ENCODE measurements at regions of chr11 and their contacts with region 1.

Region 1: GRCh38 chr11:30346068-30346688 is 23.3 kb downstream of the ARL14EP start:
- DNase-seq: no peak
- H3K4me3 Mint-ChIP-seq: no peak overlapping the region
- H3K27ac Mint-ChIP-seq: no peak overlapping the region
- H3K4me1 Mint-ChIP-seq: peaks cover 6% of the 10 kb centered on the region
- H3K27me3 Mint-ChIP-seq: no peaks in the 10 kb centered on the region

Region 2: DNA sequence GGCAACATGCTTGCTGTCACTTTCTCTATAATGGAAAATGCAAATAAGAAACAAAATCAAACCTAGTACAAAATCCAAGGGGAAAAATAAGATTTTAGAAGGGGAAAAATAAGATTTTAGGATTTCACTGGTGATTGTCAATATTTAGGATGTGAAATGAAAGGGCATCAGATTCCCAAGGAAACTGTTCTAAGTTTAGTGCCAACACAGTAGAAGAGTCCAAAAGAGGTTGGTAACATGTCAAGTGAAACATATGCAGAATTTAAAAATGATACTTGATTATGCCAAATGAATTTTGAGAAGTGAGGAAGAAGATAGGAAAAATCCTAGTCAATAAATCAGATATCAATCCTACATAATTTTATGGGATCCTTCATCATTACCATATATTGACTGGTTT is 69.0 kb before region 1 on chr11:
- intact Hi-C with region 1: no loop called
- DNase-seq: no peak
- H3K4me3 Mint-ChIP-seq: no peak overlapping the region
- H3K27ac Mint-ChIP-seq: no peak overlapping the region
- H3K4me1 Mint-ChIP-seq: peaks cover 8% of the 10 kb centered on the region
- H3K27me3 Mint-ChIP-seq: no peaks in the 10 kb centered on the region

Region 3: DNA sequence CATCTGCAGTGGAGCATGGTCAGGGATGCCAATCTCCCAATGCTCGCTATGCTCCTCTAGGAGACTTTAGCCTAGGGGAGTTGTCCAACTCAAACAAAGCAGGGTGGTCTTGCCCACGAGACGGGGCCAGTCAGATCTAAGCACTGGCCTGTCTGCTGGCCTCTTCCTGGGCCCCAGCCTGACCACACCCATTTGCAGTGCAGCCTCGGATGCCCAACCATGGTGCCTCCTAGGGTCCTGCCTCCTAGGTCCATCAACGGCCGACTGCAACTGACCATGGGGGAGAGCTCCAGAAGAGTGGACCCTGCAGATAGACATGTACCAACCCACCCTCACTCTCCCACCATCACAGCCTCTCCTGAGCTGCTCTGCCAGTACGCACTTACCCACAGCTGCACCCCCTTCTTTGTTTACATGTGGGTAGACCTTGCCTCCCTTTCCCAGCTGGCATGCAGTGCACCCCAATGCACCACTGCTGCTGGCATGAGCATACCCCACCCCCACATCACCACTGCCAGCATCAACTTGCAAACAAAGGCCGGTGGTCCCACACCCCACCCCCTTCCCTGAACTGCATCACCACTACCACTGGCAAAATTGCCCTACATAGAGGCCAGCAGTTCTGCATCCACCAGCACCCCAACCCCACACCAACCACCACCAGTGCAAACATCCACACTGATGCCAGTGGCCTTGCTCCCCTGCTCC is 50.8 kb before region 1 on chr11:
- intact Hi-C with region 1: no loop called
- DNase-seq: no peak
- H3K4me3 Mint-ChIP-seq: no peak overlapping the region
- H3K27ac Mint-ChIP-seq: no peak overlapping the region
- H3K4me1 Mint-ChIP-seq: no peaks in the 10 kb centered on the region
- H3K27me3 Mint-ChIP-seq: peaks cover 6% of the 10 kb centered on the region

Region 4: GRCh38 chr11:30322826-30323710 is 23.1 kb before region 1 on chr11 and contains the start of gene ARL14EP:
- intact Hi-C with region 1: loop called (anchors 2 kb)
- DNase-seq: peak; percentile 85
- H3K4me3 Mint-ChIP-seq: peak within 1 kb of the TSS; percentile 99
- H3K27ac Mint-ChIP-seq: peak within 1 kb of the TSS; percentile 99
- H3K4me1 Mint-ChIP-seq: peaks cover 34% of the 10 kb centered on the region
- H3K27me3 Mint-ChIP-seq: peaks cover 9% of the 10 kb centered on the region
- total RNA-seq, gene ARL14EP: 35.8 TPM in 2 replicates

Region 5: DNA sequence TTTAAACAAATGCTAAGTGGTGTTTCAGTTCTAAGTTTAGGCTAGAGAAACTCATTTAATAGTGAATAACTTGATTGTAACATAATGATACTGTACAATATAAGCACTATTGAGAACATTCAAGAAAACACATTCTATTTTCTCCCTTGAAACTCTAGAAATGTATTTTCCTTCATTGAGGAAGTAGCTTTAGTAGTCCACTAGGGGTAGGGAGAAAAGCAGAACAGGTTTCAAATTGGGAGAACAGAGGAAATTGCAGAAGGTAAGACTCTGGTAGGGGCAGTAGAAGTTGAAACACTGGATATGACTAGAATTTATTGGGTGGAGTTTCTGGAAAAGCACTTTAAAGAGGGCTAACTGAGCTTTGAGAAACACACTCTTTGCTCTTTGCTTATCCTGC is 271.6 kb after region 1 on chr11:
- intact Hi-C with region 1: no loop called
- DNase-seq: no peak
- H3K4me3 Mint-ChIP-seq: no peak overlapping the region
- H3K27ac Mint-ChIP-seq: no peak overlapping the region
- H3K4me1 Mint-ChIP-seq: no peaks in the 10 kb centered on the region
- H3K27me3 Mint-ChIP-seq: no peaks in the 10 kb centered on the region

Region 6: GRCh38 chr11:30917859-30918478 is 571.8 kb after region 1 on chr11:
- intact Hi-C with region 1: loop called (anchors 2 kb)
- DNase-seq: no peak
- H3K4me3 Mint-ChIP-seq: no peak overlapping the region
- H3K27ac Mint-ChIP-seq: no peak overlapping the region
- H3K4me1 Mint-ChIP-seq: no peaks in the 10 kb centered on the region
- H3K27me3 Mint-ChIP-seq: peaks cover 6% of the 10 kb centered on the region

Measured in activated T-helper 2 cell treated with anti-CD3 and anti-CD28 coated beads, Interferon-gamma antibody, Interleukin-2, Interleukin-4, amounts not matched to agents 10 μg/mL and 5 μg/mL and 100 μg/mL, durations not matched to agents 14 hours and 24 hours and 36 hours (primary cell).